IMR-90 (cell line): ENCODE measurements at regions of chr1 and their contacts with region 1.

Region 1: DNA sequence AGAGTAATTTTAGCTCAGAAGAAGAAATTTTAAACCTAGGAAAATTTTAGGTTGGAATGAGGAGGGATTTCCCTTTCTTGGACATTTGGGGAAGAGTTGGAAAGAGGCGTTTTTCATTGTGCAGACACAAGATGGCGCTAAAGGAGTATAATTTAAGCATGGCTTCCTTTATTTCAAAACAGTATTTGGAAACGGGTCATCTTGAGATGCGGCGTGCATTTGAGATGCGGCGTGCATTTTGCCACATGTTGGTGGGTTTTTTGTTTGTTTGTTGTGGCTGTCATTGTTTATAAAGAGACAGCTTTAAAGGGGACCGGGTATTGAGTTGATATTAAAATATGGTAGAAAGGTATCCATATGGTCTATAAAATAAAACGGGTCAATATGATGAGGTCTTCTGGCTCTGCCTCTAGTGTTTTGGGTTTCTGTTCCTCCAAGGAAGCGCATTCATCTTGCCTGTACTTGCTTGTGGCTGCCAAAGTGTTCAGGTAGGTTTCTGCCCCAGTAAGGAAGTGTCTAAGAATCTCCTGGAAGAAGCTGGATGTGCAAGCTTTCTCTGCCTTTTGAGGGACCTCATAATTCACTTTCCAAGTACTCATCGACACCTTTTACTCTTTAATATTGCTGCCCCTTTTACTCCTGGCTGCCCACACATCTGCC is 210.3 kb downstream of the SLC35F3 start:
- DNase-seq: peak; percentile 59
- ATAC-seq: peak; percentile 87
- H3K4me3 ChIP-seq: peak overlapping the region; percentile 25; the same call in 1 of the 2 replicates
- H3K27ac ChIP-seq: no peak overlapping the region
- H3K4me1 ChIP-seq: no peaks in the 10 kb centered on the region
- H3K27me3 ChIP-seq: no peaks in the 10 kb centered on the region
- CTCF ChIP-seq: peak; percentile 76
- POLR2A ChIP-seq: no peak
- RAD21 ChIP-seq: peak; percentile 69

Region 2: DNA sequence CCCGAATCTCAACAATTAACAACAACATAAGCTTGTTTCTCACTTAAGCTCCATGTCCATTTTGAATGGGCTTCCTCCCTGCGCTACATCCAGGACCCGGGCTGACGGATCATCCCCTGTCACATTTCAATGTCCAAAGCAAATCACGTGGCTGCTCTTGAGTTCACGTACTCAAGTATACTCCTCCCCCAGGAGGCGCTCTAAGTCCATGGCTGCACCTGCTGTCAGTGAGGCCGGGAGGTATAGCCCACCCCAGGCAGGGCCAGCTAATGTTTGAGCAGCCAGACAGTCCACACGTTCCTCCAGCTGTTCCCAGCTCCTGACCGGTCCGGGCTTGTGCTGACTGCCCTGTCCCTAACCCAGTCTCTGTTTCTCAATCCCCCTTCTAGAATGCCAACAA is 10.5 kb after region 1 on chr1:
- CTCF ChIA-PET with region 1: interaction called, 12 read pairs
- POLR2A ChIA-PET with region 1: no interaction called
- dilution Hi-C with region 1: no loop called
- in situ Hi-C with region 1: no loop called
- intact Hi-C with region 1: no loop called
- DNase-seq: peak; percentile 44
- ATAC-seq: peak; percentile 73
- H3K4me3 ChIP-seq: no peak overlapping the region
- H3K27ac ChIP-seq: no peak overlapping the region
- H3K4me1 ChIP-seq: no peaks in the 10 kb centered on the region
- H3K27me3 ChIP-seq: no peaks in the 10 kb centered on the region
- CTCF ChIP-seq: peak; percentile 48
- POLR2A ChIP-seq: no peak
- RAD21 ChIP-seq: peak; percentile 62

Region 3: DNA sequence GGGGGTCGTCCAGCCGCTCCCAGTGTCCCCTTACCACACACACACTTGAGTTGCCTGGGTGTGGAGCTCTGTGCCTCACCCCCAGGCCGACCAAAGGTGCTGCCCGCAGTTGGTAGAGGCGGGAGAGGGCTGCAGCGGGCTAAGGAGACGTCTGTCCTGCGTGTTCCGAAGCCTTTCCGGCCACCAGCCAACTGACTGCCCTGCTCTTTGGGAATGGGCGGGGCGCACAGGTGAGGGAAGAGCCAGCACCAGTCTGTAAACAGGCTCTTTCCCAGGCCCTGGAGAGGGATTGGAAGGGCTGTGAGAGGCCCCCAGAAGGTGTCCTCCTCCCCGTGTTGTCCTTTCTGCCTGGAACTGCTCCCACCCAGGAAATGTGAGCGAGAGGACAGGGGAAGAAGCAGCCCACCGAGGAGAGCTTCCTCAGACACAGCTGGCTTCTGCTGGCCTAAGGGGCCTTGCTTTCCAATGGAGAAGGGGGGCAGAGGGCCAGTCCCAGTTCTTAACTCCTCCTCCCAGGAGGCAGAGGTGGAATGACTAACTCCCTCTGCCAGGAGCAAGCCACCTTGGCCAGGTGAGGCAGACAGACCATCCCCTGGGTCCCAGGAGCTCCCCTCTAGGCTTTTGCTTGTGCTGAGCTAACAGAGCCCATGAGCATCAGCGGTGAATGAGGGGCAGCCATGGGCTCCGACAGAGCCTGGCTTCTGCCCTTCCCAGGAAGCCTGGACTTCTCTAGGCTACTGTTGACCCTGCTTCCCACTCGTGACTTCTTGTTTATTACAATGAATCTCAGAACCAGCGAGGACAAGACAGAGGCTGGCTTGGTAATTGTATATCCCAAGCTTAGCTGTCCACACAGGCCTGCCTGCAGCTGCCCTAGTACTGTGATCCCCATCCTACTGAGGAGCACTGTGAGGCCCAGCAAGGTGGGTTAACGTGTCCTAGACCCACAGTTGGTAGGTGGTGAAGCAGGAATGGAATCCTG is 100.4 kb after region 1 on chr1:
- CTCF ChIA-PET with region 1: no interaction called
- POLR2A ChIA-PET with region 1: no interaction called
- dilution Hi-C with region 1: no loop called
- in situ Hi-C with region 1: no loop called
- intact Hi-C with region 1: no loop called
- DNase-seq: no peak
- ATAC-seq: no peak
- H3K4me3 ChIP-seq: peak overlapping the region; percentile 54
- H3K27ac ChIP-seq: no peak overlapping the region
- H3K4me1 ChIP-seq: no peaks in the 10 kb centered on the region
- H3K27me3 ChIP-seq: peaks cover 8% of the 10 kb centered on the region
- CTCF ChIP-seq: no peak
- POLR2A ChIP-seq: no peak
- RAD21 ChIP-seq: no peak

Region 4: DNA sequence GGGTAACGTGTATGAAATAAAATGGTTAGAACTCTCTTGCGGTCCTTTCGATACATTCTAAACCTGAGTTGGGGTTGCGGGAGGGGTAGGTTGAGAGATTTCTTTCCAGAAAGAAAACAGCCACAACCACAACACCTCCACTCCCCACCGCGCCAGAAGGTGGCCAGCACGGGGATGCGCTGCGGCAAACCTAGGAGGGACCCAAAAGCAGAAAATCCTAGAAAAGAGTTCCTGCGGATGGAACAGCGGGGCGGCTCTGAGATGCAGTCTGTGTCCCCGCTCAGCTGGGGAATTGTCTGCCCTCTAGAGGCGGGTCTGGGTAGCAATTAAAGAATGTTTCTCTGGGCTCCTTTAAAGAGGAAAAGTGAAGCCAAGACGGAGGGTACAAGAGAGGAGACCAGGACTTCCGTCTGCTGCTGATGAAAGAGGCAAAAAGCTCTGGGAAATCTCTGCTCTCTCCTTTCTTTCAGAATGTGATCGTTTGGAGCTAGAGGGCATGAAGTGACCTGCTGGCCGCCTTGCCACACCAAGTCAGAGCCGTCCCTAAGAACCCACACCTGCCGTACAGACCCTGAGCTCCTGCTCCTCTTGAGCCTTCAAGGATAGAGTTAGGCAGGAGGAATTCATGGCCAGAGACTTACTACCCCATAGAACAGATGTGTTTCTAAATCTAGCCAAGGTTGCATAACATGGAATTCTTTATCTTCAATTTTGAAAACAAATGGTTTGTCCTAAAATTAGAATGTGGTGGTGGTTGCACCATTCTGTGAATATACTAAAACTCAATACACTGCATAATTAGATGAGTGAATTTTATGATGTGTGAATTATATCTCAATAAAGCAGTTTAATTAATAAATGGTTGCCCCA is 212.0 kb after region 1 on chr1:
- CTCF ChIA-PET with region 1: interaction called, 5 read pairs
- POLR2A ChIA-PET with region 1: no interaction called
- dilution Hi-C with region 1: no loop called
- in situ Hi-C with region 1: no loop called
- intact Hi-C with region 1: loop called (anchors 1 kb)
- DNase-seq: peak; percentile 43
- ATAC-seq: peak; percentile 92
- H3K4me3 ChIP-seq: peak overlapping the region; percentile 40; the same call in 1 of the 2 replicates
- H3K27ac ChIP-seq: no peak overlapping the region
- H3K4me1 ChIP-seq: peaks cover 3% of the 10 kb centered on the region
- H3K27me3 ChIP-seq: peaks cover 4% of the 10 kb centered on the region
- CTCF ChIP-seq: peak; percentile 72
- POLR2A ChIP-seq: no peak
- RAD21 ChIP-seq: peak; percentile 59

Region 5: GRCh38 chr1:234599617-234600417 is 485.0 kb after region 1 on chr1:
- CTCF ChIA-PET with region 1: no interaction called
- POLR2A ChIA-PET with region 1: no interaction called
- dilution Hi-C with region 1: no loop called
- in situ Hi-C with region 1: loop called (anchors 25 kb)
- intact Hi-C with region 1: loop called (anchors 5 kb)
- DNase-seq: peak; percentile 82
- ATAC-seq: peak; percentile 89
- H3K4me3 ChIP-seq: peak overlapping the region; percentile 51
- H3K27ac ChIP-seq: peak overlapping the region; percentile 83
- H3K4me1 ChIP-seq: peaks cover 9% of the 10 kb centered on the region
- H3K27me3 ChIP-seq: no peaks in the 10 kb centered on the region
- CTCF ChIP-seq: no peak
- POLR2A ChIP-seq: peak; percentile 39
- RAD21 ChIP-seq: no peak